ENCODE measurements at regions of chr1 and their contacts with region 1.

Region 1: GRCh38 chr1:163421701-163422100 is 99.9 kb downstream of the NUF2 start:
- DNase-seq: no peak
- H3K4me3 Mint-ChIP-seq: no peak overlapping the region
- H3K27ac Mint-ChIP-seq: no peak overlapping the region
- H3K4me1 Mint-ChIP-seq: no peaks in the 10 kb centered on the region
- H3K27me3 Mint-ChIP-seq: peaks cover 18% of the 10 kb centered on the region
- CTCF ChIP-seq: no peak

Region 2: GRCh38 chr1:163399976-163400601 is 21.6 kb before region 1 on chr1:
- CTCF ChIA-PET with region 1: no interaction called
- POLR2A ChIA-PET with region 1: no interaction called
- intact Hi-C with region 1: no loop called
- DNase-seq: no peak
- H3K4me3 Mint-ChIP-seq: no peak overlapping the region
- H3K27ac Mint-ChIP-seq: no peak overlapping the region
- H3K4me1 Mint-ChIP-seq: no peaks in the 10 kb centered on the region
- H3K27me3 Mint-ChIP-seq: peaks cover 13% of the 10 kb centered on the region
- CTCF ChIP-seq: no peak

Region 3: DNA sequence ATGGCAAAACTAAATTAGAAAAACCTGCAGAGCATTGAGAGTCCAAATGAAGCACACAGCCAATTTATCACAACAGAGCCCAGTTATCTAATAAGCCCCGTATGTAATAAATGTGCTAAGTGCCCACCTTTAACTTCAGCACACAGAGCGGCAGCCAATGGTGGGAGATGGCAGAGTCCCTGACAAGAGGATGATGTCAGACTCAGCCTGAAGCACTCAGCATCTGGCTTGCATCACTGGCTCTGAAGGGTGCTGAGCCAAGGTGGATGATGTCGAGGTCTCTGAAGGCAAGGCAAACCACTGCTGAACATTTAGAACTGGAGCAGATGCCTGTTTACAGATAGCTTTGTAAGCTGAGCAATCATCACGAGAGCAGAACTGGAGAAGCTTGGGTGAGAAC is 18.4 kb after region 1 on chr1:
- CTCF ChIA-PET with region 1: no interaction called
- POLR2A ChIA-PET with region 1: no interaction called
- intact Hi-C with region 1: loop called (anchors 2 kb)
- DNase-seq: no peak
- H3K4me3 Mint-ChIP-seq: no peak overlapping the region
- H3K27ac Mint-ChIP-seq: no peak overlapping the region
- H3K4me1 Mint-ChIP-seq: no peaks in the 10 kb centered on the region
- H3K27me3 Mint-ChIP-seq: peaks cover 13% of the 10 kb centered on the region
- CTCF ChIP-seq: no peak

Region 4: GRCh38 chr1:163673759-163674151 is 252.1 kb after region 1 on chr1:
- CTCF ChIA-PET with region 1: no interaction called
- POLR2A ChIA-PET with region 1: no interaction called
- intact Hi-C with region 1: no loop called
- DNase-seq: no peak
- H3K4me3 Mint-ChIP-seq: no peak overlapping the region
- H3K27ac Mint-ChIP-seq: no peak overlapping the region
- H3K4me1 Mint-ChIP-seq: no peaks in the 10 kb centered on the region
- H3K27me3 Mint-ChIP-seq: no peaks in the 10 kb centered on the region
- CTCF ChIP-seq: no peak

Measured in MCF 10A (cell line).